CD8-positive, alpha-beta T cell (primary cell): ENCODE measurements at regions of chr12 and their contacts with region 1.

Region 1: GRCh38 chr12:115485967-115486366 is 791.5 kb downstream of the MED13L start:
- DNase-seq: no peak
- ATAC-seq: no peak
- H3K4me3 ChIP-seq: no peak overlapping the region
- H3K4me3 Mint-ChIP-seq: no peak overlapping the region
- H3K27ac ChIP-seq: no peak overlapping the region
- H3K27ac Mint-ChIP-seq: no peak overlapping the region
- H3K4me1 ChIP-seq: no peaks in the 10 kb centered on the region
- H3K4me1 Mint-ChIP-seq: no peaks in the 10 kb centered on the region
- H3K27me3 ChIP-seq: no peaks in the 10 kb centered on the region
- H3K27me3 Mint-ChIP-seq: no peaks in the 10 kb centered on the region
- CTCF ChIP-seq: no peak

Region 2: GRCh38 chr12:115511986-115512711 is 26.2 kb after region 1 on chr12:
- CTCF ChIA-PET with region 1: no interaction called
- POLR2A ChIA-PET with region 1: no interaction called
- intact Hi-C with region 1: loop called in 1 of 2 experiments (anchors 2 kb)
- DNase-seq: no peak
- ATAC-seq: no peak
- H3K4me3 ChIP-seq: no peak overlapping the region
- H3K4me3 Mint-ChIP-seq: no peak overlapping the region
- H3K27ac ChIP-seq: no peak overlapping the region
- H3K27ac Mint-ChIP-seq: no peak overlapping the region
- H3K4me1 ChIP-seq: no peaks in the 10 kb centered on the region
- H3K4me1 Mint-ChIP-seq: no peaks in the 10 kb centered on the region
- H3K27me3 ChIP-seq: no peaks in the 10 kb centered on the region
- H3K27me3 Mint-ChIP-seq: no peaks in the 10 kb centered on the region
- CTCF ChIP-seq: no peak